PC-9 (cell line): ENCODE measurements at regions of chr10 and their contacts with region 1.

Region 1: DNA sequence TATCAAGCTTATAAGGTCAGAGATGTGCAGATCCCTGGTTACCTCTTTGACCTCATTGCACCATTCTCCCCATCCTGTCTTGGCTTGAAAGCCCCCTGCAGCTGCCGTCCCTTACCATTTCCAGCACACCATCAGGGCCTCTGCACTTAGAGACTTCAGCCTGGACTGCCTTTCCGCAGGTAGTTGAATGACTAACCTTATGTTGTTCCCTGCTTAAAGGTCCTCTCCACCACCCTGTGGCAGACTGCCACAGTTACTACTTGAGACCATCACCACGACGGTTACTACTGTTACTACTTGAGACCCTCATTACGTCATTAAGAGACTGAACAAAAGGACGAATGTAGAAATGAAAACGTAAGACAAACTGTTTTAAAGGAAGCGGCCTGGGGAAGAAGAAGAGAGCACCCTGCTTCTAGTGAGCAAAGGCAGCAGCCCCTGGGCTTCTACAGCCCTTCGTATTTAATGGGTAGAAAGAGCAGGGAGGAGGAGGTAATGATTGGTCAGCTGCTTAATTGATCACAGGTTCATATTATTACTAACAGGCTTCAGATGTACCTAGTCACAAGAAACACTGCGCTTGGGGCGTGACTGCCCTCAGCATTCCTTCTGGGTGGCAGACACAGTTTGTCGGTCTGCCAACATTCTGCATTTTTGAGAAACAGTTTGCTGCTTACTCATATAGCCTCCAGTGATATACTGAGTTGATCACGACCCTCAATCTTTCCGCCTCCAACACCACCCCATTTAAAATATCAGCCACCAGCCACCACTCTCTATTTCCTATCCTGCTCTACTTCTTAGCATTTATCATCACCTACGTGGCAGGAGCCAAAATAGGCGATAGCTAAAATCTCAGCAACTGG is 74.1 kb upstream of the PARD3 start:
- DNase-seq: peak; percentile 73 to 76
- H3K4me3 ChIP-seq: no peak overlapping the region
- H3K27ac ChIP-seq: peak overlapping the region; percentile 34; the same call in 1 of the 2 replicates
- H3K4me1 ChIP-seq: peaks cover 4% of the 10 kb centered on the region
- H3K27me3 ChIP-seq: no peaks in the 10 kb centered on the region
- CTCF ChIP-seq: no peak

Region 2: DNA sequence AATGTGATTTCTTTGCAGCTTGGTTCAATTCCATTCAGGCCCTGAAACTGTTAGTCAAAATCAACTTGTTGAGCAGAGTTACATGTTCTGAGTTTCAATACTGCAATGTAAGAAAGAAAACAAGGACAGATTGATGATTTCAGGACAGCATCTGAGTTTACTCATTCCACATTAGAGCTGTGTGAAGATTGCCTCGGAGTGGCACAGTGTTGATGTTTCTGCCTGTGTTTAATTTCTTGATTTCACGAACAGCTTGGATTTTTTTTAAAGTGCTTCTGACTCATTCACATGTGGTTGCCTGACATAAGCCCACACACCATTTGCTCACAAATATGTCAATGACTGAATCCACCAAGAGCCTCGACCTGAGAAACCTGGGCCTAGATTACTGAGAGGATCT is 27.1 kb after region 1 on chr10:
- CTCF ChIA-PET with region 1: no interaction called
- POLR2A ChIA-PET with region 1: no interaction called
- intact Hi-C with region 1: no loop called
- DNase-seq: no peak
- H3K4me3 ChIP-seq: no peak overlapping the region
- H3K27ac ChIP-seq: no peak overlapping the region
- H3K4me1 ChIP-seq: no peaks in the 10 kb centered on the region
- H3K27me3 ChIP-seq: no peaks in the 10 kb centered on the region
- CTCF ChIP-seq: no peak

Region 3: GRCh38 chr10:34979938-34980337 is 90.7 kb after region 1 on chr10:
- CTCF ChIA-PET with region 1: no interaction called
- POLR2A ChIA-PET with region 1: no interaction called
- intact Hi-C with region 1: loop called (anchors 10 kb)
- DNase-seq: no peak
- H3K4me3 ChIP-seq: no peak overlapping the region
- H3K27ac ChIP-seq: no peak overlapping the region
- H3K4me1 ChIP-seq: 0 out of 2 replicates have a peak, but pooled peaks cover 5% of the 10 kb centered on the region
- H3K27me3 ChIP-seq: no peaks in the 10 kb centered on the region
- CTCF ChIP-seq: no peak